Activated T-helper 1 cell treated with anti-CD3 and anti-CD28 coated beads, Interleukin-12 subunit alpha, Interleukin-12 subunit beta, Interleukin-2, Interleukin-4 antibody, amounts not matched to agents 30 ng/mL and 10 ng/mL and 1 ng/mL, durations not matched to agents 14 hours and 24 hours and 36 hours (primary cell): ENCODE measurements at regions of chr1 and their contacts with region 1.

Region 1: GRCh38 chr1:58884706-58885661 is 101.1 kb upstream of the JUN start:
- DNase-seq: peak; percentile 3
- H3K4me3 Mint-ChIP-seq: peak overlapping the region; percentile 65
- H3K27ac Mint-ChIP-seq: peak overlapping the region; percentile 78
- H3K4me1 Mint-ChIP-seq: peaks cover 70% of the 10 kb centered on the region
- H3K27me3 Mint-ChIP-seq: peaks cover 5% of the 10 kb centered on the region

Region 2: GRCh38 chr1:58805716-58806571 is 79.0 kb before region 1 on chr1:
- intact Hi-C with region 1: no loop called
- DNase-seq: no peak
- H3K4me3 Mint-ChIP-seq: no peak overlapping the region
- H3K27ac Mint-ChIP-seq: no peak overlapping the region
- H3K4me1 Mint-ChIP-seq: peaks cover 43% of the 10 kb centered on the region
- H3K27me3 Mint-ChIP-seq: no peaks in the 10 kb centered on the region

Region 3: DNA sequence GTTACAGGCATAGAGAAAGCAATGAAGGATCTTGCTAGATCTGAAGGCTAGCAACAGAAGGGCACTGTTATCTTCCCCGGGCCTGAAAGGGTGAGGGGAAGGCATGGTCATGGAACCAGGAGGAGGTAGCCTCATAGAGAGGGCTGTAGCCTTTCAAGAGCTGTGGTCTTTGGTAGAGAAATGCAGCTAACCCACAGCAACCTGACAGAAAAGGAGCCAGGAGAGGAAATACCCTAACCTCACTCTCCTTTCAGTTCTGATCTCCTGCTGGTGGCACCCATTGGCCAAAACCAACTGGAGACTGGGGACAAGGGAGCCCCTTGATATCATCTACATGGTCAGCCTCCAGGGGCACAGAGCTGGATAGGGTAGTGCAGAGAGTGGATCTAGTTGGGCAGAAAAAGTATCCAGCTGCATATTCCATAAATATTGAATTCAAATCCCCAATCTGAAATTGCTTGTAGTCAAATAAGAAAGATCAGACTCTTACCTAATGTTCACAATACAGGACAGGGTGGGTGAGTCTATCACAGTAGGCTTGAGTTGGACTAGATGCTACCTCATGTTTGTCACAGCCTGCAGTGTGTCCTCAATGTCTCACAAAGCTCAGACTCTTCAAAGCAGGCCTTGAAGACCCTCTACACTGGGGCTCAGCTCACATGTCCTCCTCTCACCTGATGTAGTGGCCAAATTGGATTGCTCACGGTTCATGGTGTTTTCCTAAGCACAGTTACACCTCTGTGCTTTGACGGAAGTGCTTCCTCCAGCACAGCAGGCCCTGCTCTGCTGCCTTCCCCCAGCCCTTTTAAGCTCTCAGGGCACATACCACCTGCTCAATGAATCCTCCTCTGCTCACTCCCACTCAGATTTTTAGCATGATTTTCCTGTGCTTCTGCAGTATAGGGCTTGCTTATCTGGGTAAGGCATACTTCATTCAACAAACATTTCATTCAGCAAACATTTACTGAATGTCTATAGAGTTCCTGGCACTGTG is 27.0 kb before region 1 on chr1:
- intact Hi-C with region 1: loop called (anchors 5 kb)
- DNase-seq: peak; percentile 43
- H3K4me3 Mint-ChIP-seq: peak overlapping the region; percentile 61
- H3K27ac Mint-ChIP-seq: peak overlapping the region; percentile 95
- H3K4me1 Mint-ChIP-seq: peaks cover 74% of the 10 kb centered on the region
- H3K27me3 Mint-ChIP-seq: no peaks in the 10 kb centered on the region